A549 (cell line): ENCODE measurements at regions of chr7 and their contacts with region 1.

Region 1: DNA sequence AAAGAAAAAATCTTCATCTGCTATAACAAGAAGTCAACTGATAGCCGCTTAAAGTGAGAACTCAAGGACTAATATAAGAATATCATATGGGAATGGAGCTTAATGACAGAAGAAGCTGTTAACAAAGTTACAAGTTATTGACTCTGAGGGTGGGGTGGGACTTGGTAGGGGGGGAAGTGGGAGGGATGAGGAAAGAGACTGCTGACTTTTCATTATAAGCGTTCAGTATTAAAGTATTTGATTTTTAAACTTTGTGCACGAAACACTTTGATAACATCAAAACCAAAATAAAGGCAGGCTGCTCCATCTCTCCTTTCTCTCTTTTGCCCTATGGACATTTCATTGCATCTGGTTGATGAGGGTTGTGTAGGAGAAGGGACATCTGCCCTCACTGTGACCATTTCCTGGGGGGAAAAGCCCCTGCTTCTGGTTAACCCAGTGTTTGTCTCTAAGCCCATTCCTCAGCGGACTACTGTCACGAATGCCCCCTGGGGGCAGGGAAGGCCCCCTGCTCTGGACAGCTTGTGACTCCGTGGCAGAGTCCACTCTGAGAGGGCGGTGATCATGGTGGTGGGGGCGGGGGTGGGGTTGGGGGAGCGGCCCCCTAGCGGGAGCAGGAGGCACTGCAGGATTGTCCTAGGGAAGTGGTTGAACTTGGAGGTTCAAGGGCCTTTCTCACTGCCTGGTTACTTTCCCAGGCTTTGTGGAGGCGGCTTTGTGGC is 17.4 kb downstream of the SLC13A4 start:
- DNase-seq: peak; percentile 25 to 46
- ATAC-seq: peak in 1 of 2 experiments; percentile 51; a peak in 3 of 6 replicates
- H3K4me3 ChIP-seq: no peak overlapping the region
- H3K27ac ChIP-seq: no peak overlapping the region
- H3K4me1 ChIP-seq: peaks cover 14% of the 10 kb centered on the region
- CTCF ChIP-seq: peak; percentile 56
- EP300 ChIP-seq: no peak
- POLR2A ChIP-seq: no peak
- RAD21 ChIP-seq: no peak; a peak in 1 of 5 replicates

Region 2: GRCh38 chr7:135697276-135698049 is 13.1 kb before region 1 on chr7:
- CTCF ChIA-PET with region 1: interaction called, 17 read pairs
- POLR2A ChIA-PET with region 1: no interaction called
- DNase-seq: no peak
- ATAC-seq: no peak
- H3K4me3 ChIP-seq: no peak overlapping the region
- H3K27ac ChIP-seq: no peak overlapping the region
- H3K4me1 ChIP-seq: no peaks in the 10 kb centered on the region
- CTCF ChIP-seq: no peak
- EP300 ChIP-seq: no peak
- POLR2A ChIP-seq: no peak
- RAD21 ChIP-seq: no peak

Region 3: DNA sequence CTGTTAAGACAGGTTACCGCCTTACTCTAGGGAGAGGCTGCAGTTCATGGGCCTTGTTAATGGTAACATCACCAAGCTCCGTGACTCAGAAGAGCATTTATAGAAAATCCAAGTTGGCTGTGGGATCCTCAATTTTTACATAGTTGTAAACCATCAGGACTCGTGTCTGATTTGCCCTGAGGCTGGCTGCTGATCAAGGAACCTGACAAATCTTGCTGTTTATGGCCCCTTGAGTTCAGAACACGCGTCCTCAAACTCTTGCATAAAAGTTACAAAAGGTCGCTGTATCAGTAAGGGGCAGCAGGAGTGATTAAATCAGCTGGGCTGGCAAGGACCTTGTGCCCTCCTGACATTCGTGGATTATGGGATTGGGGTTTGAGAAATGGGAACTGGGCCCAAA is 12.8 kb after region 1 on chr7:
- CTCF ChIA-PET with region 1: interaction called, 14 read pairs
- POLR2A ChIA-PET with region 1: no interaction called
- DNase-seq: no peak
- ATAC-seq: no peak
- H3K4me3 ChIP-seq: no peak overlapping the region
- H3K27ac ChIP-seq: no peak overlapping the region
- H3K4me1 ChIP-seq: no peaks in the 10 kb centered on the region
- CTCF ChIP-seq: no peak
- EP300 ChIP-seq: no peak
- POLR2A ChIP-seq: no peak
- RAD21 ChIP-seq: no peak